GM10248 (cell line): ENCODE measurements at regions of chr17 and their contacts with region 1.

Region 1: GRCh38 chr17:80092959-80093358 is 8.4 kb upstream of the GAA start:
- DNase-seq: no peak
- CTCF ChIP-seq: no peak

Region 2: DNA sequence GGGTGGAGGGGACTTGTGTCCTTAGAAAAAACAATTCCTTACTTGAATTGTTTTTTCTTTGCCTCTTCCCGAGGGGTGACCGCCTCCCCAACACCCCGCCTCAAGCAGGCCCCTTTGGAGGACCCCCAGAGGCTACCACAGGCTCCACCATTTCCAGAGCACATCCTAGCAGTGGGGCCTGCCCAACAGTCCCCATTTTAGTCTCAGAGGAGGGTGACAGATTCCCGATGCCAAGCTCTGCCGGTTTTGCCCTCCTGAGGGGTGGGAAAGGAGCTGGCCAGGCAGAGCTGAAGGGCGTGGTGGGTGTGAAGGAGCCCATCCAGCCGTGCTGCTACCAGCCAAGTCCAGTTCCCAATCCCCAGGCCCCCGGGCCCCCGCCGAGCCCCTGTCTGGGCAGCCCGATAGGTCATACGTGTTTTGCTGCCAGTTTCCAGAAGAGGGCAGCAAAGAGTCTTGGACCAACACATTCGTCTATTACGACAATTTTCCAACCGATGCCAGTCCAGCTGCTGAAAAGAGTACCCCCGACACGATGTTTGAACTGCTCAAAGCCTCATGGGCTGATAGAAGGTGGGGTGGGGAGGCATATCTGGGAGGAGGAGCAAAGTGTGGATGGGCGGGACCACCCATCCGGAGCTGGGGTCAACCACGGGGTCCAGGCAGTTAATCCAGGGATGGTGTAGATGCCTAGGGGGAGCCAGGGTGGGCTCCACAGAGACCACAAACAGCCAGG is 10.4 kb before region 1 on chr17:
- CTCF ChIA-PET with region 1: interaction called, 23 read pairs
- POLR2A ChIA-PET with region 1: no interaction called
- DNase-seq: peak; percentile 84
- CTCF ChIP-seq: peak; percentile 76